AG04449 (cell line): ENCODE measurements at regions of chr20 and their contacts with region 1.

Region 1: DNA sequence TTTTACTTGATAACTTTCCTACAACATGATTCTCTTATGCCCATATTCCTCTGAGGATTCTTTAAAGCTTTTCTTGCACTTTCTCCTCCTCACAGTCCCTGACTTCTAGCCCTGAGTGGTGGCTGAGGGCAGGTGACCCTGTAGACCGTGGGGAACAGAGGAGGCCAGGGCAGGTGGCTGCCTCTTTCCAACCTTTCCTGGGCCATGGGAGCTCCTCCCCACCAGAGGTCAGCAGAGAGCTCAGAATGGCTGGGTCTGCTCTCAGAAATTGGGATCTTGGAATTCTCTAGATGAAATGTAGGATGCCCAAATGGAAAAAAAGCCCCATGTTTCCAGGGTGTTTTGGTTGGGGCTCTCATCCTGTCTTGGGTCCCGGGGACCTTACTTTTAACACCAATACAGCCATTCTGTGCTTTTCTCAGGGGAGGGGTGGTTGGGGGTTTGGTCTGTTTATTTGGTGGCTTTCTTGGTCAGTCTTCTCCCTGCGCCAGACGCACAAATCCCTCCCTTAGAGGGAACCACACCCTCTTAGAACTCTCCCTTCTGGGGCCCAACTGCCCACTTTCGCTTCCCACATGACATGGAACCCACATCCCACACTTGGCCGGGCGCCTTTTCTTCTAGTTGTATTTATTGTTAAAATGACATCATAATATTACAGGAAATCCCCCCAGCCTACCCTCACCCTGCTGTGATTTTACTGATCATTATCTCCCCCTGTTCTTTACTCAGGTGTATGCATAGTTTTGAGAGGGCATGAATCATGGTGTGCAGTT is 17.9 kb downstream of the GNAS start:
- DNase-seq: no peak
- H3K4me3 ChIP-seq: no peak overlapping the region
- CTCF ChIP-seq: peak; percentile 94

Region 2: GRCh38 chr20:58880994-58881752 is 10.7 kb after region 1 on chr20:
- CTCF ChIA-PET with region 1: interaction called, 26 read pairs
- POLR2A ChIA-PET with region 1: no interaction called
- DNase-seq: no peak
- H3K4me3 ChIP-seq: no peak overlapping the region
- CTCF ChIP-seq: no peak

Region 3: DNA sequence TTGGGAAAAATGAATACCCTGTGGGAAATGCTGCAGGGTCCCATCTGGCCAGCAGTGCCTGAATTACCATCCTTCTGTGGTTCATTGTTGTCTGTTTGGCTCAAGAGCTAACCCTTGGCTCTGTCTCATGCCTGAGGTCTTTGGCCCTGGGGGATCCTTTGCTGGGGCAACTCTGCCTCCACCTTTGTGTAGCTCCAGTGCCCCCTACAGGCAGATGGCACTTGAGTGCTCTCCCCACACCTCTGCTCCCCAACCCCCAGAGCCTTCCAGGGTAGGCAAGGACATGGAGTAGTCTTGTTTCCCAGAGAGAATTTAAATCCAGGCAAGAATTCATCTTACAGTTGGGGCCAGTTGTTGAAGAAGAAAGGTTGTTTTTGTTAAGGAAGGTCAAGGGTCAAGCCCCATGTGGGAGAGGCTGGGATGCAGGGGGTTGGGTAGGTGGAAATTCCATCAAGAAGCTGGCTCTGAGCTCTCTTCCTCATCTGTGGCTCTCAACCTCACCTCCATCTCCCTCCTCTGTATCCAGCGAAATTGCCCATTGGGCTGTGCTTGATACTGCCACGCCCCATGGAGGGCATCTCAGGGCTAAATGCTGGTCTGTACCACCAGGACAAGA is 337.4 kb after region 1 on chr20:
- CTCF ChIA-PET with region 1: interaction called, 16 read pairs
- POLR2A ChIA-PET with region 1: no interaction called
- DNase-seq: no peak
- H3K4me3 ChIP-seq: no peak overlapping the region
- CTCF ChIP-seq: peak; percentile 9

Region 4: GRCh38 chr20:59403261-59403961 is 533.0 kb after region 1 on chr20:
- CTCF ChIA-PET with region 1: interaction called, 11 read pairs
- POLR2A ChIA-PET with region 1: no interaction called
- DNase-seq: no peak
- H3K4me3 ChIP-seq: peak overlapping the region; percentile 23; the same call in 1 of the 2 replicates
- CTCF ChIP-seq: peak; percentile 96

Region 5: DNA sequence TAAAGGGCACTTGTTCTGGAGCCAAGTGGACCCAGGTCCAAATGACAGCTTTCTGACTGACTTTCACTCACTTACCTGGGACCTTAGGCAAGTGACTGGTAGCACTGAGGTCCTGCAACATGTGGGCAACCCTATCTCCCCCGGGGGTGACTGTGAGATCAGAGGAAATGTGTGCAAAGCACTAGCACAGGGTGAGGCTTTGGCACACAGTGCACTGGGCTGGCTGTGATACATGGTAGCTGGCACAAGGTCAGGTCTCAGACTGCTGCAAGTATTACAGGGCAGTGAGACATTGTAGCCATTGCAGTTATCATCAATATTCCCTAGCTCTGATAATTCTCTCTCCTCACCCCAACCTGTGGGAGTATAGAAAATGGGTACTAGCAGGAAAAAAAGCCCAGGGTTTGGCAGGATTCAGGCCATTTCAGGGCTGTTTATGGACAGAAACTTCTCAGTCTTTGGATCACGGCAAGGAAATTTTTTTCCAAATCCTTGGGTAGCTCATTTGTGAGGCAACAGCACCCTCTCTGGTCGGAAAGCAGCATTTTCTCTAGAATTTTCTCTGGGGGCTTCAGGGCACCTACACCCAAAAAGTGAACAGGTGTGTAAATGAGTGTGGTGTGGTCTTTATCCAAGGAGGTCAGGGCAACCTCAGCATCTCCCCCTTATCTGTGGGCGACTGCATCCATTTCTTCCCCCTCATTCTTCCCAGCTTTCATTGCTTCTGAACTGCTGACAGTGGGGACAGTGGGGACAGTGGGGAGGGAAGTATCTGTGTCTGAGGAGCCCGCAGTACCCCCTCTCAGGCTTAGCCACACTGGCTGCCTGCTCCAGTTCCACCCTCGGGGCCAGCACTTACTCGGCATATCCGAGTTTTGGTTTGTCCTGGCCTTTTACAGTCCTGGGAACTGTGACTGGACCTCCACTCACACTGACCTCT is 585.2 kb after region 1 on chr20:
- CTCF ChIA-PET with region 1: interaction called, 89 read pairs
- POLR2A ChIA-PET with region 1: no interaction called
- DNase-seq: no peak
- H3K4me3 ChIP-seq: no peak overlapping the region
- CTCF ChIP-seq: peak; percentile 57

Region 6: DNA sequence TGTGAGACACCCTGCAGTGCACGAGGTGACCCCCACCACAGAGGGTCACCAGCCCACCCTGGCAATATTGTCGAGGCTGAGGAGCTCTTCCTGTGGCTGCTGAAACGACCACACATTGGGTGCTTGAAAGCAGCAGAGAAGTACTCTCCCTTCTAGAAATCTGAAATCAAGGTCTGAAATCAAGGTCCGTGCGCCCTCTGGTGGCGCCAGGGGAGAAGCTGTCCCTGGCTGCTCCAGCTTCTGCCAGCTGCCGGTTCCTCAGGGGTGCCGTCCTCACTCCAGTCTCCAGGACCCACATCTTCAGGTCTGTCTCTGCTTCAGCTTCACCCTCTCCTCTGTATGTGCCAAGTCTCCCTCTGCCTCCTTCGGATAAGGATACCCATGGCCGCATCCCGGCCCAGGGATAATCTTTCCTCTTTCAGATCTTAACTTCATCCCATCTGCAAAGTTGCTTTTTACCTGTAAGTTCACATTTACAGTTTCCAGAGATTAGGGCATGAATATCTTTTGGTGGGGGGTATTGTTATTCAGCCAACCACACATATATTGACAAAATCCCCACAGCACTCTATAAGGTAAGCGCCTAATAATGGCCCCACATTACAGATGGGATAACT is 625.6 kb after region 1 on chr20:
- CTCF ChIA-PET with region 1: interaction called, 28 read pairs
- POLR2A ChIA-PET with region 1: no interaction called
- DNase-seq: no peak
- H3K4me3 ChIP-seq: no peak overlapping the region
- CTCF ChIP-seq: peak; percentile 93